ENCODE measurements at regions of chr13 and their contacts with region 1.

Region 1: DNA sequence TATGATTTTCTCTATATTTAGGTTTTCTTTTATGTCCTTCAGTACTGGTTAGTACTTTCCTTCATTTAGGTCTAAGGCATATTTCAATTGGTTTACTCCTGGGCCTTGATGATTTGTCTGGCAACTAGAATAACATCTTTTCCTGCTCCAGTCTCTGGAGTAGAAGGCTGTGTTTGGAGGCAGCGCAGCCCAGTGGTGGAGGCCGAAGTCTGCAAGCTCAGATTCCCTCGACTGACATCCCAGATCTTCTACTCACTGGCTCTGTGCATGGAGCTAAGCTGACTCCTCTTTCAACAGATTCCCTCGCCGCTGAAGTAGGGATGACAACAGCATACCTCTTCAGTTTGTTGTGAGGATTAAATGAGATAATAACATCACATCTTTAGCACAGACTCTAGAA is 141.0 kb downstream of the RAP2A start:
- DNase-seq: no peak
- ATAC-seq: peak; percentile 89
- H3K4me3 ChIP-seq: no peak overlapping the region
- H3K27ac ChIP-seq: no peak overlapping the region
- H3K4me1 ChIP-seq: no peaks in the 10 kb centered on the region
- H3K27me3 ChIP-seq: no peaks in the 10 kb centered on the region; a peak in 1 of 4 replicates
- CTCF ChIP-seq: peak; percentile 57 to 82 (median 75); a peak in 5 of 6 replicates
- EP300 ChIP-seq: no peak
- POLR2A ChIP-seq: no peak
- RAD21 ChIP-seq: peak; percentile 81

Region 2: DNA sequence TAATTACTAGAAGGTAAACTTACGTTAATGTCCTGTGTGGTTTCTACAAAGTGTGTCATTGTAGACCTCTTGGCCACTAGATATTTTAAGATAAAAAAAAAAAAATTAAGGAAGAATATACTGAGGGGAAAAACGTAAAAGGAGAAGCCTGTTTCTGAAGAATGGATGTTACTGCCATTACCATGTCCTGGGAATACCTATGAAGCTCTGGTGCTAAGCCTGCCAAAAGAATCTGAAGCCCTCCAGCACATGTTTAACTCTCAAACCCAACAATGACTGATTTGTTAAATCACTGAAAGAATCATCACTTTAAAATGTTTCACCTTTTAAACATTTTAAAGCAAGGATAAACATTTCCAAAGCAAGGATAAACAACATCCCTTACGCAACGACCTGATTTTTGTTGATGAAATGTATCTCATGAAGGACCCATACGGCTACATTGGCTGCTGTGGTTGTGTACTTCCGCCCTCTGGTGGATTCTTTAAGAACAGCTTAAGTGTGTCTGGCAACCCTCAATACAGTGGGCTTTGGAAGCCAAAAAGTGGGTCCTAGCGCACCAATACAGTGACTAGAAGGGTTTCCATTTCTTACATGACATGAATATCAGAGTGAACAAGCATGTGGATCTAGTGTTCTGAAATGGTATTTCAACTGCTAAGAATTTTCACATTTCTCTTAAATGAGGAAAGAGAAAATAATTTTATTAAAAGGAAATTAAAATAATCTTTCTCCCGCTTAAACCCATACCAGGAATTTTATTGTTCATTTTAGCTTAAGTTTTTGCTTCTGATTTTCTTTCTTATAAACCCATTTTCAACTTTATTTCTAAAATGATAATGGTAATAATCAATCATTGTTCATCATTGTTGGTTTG is 215.5 kb before region 1 on chr13:
- CTCF ChIA-PET with region 1: interaction called, 29 read pairs
- POLR2A ChIA-PET with region 1: interaction called, 5 read pairs
- RAD21 ChIA-PET with region 1: interaction called, 8 read pairs
- SMC1A ChIA-PET with region 1: interaction called, 26 read pairs
- in situ Hi-C with region 1: no loop called
- intact Hi-C with region 1: loop called (anchors 10 kb)
- DNase-seq: no peak
- ATAC-seq: peak; percentile 100
- H3K4me3 ChIP-seq: no peak overlapping the region
- H3K27ac ChIP-seq: no peak overlapping the region
- H3K4me1 ChIP-seq: no peaks in the 10 kb centered on the region
- H3K27me3 ChIP-seq: no peaks in the 10 kb centered on the region
- CTCF ChIP-seq: peak; percentile 77 to 84 (median 83)
- EP300 ChIP-seq: no peak
- POLR2A ChIP-seq: no peak
- RAD21 ChIP-seq: peak; percentile 90

Region 3: GRCh38 chr13:98685146-98685545 is 1110.2 kb after region 1 on chr13:
- CTCF ChIA-PET with region 1: no interaction called
- POLR2A ChIA-PET with region 1: no interaction called
- RAD21 ChIA-PET with region 1: no interaction called
- SMC1A ChIA-PET with region 1: no interaction called
- in situ Hi-C with region 1: no loop called
- intact Hi-C with region 1: no loop called
- DNase-seq: no peak
- ATAC-seq: no peak
- H3K4me3 ChIP-seq: no peak overlapping the region
- H3K27ac ChIP-seq: no peak overlapping the region
- H3K4me1 ChIP-seq: no peaks in the 10 kb centered on the region
- H3K27me3 ChIP-seq: 0 out of 4 replicates have a peak, but pooled peaks cover 0 to 2% of the 10 kb centered on the region in 2 experiments
- CTCF ChIP-seq: no peak
- EP300 ChIP-seq: no peak
- POLR2A ChIP-seq: no peak
- RAD21 ChIP-seq: no peak

Measured in GM12878 (cell line).